GM18951 (cell line): ENCODE measurements at regions of chr6 and their contacts with region 1.

Region 1: DNA sequence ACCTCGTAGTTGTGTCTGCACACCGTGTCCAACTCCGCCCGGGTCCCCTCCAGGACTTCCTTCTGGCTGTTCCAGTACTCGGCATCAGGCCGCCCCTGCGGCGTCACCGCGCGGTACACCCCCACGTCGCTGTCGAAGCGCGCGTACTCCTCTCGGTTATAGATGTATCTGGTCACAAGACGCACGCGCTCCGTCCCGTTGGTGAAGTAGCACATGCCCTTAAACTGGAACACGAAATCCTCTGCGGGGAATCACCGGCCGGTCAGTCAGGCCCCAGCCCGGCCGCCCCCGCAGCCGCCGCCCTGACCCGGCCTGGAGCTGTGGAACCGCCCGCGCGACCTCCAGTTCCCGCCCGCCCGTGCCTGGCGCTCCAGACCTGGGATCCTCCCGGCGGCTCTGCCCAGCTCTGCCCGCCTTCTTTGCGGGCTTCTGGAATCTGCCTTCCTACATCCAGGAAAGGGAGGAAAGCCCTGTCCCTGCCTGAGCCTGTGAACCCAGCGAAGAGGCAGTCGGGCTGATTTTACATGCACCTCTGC is 1.6 kb downstream of the HLA-DQB1 start:
- POLR2A ChIP-seq: no peak

Region 2: DNA sequence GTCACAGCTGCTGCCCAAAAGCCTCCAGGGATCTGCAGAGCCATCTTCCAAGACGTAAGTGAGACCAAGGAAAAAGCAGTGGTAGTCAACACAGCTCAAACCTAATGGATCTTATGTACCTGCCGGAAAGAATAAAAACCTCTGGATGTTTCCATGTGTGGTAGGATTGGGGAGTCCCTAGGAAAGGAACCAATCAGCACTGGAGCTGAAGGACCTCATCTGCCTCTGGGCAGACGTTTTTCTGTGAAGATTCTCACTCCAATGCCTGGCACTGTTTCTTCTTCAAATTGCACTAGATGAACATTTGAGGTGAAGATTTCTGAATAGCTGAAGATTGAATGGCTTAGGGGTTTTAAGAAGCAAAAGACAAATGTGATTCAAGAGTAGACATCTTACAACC is 98.5 kb after region 1 on chr6 and contains the start of gene HLA-DQB2:
- in situ Hi-C with region 1: loop called (anchors 5 kb)
- POLR2A ChIP-seq: no peak